Panc1 (cell line): ENCODE measurements at regions of chr7 and their contacts with region 1.

Region 1: GRCh38 chr7:25246306-25246705 is 18.0 kb upstream of the NPVF start:
- DNase-seq: no peak
- ATAC-seq: no peak
- H3K4me3 ChIP-seq: no peak overlapping the region
- H3K27ac ChIP-seq: no peak overlapping the region
- H3K4me1 ChIP-seq: no peaks in the 10 kb centered on the region
- H3K27me3 ChIP-seq: peaks cover under 1% of the 10 kb centered on the region; the same call in 1 of the 2 replicates
- CTCF ChIP-seq: no peak

Region 2: GRCh38 chr7:24948739-24949138 is 297.6 kb before region 1 on chr7:
- CTCF ChIA-PET with region 1: no interaction called
- POLR2A ChIA-PET with region 1: no interaction called
- in situ Hi-C with region 1: no loop called
- intact Hi-C with region 1: no loop called
- DNase-seq: no peak
- ATAC-seq: no peak
- H3K4me3 ChIP-seq: no peak overlapping the region
- H3K27ac ChIP-seq: no peak overlapping the region
- H3K4me1 ChIP-seq: no peaks in the 10 kb centered on the region
- H3K27me3 ChIP-seq: no peaks in the 10 kb centered on the region
- CTCF ChIP-seq: no peak

Region 3: DNA sequence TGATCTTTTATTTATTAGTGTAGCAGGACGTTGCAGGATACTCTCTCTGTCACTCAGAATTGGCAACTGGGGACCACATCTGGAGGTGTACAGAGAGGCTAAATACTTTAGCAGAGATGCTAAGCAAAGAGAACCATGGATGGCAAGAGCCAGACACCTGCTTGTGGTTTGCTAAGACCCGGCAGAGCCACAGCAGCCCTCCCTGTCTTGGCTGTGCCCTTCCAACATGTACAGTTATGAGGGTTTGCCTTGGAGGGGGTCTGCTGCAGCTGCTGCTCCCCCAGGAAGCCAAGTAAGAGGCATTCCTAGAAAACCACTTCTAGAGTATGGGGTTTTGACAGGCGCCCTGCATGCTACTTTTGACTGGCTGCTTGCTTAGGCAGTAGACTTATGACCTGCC is 23.1 kb before region 1 on chr7:
- CTCF ChIA-PET with region 1: interaction called, 4 read pairs
- POLR2A ChIA-PET with region 1: no interaction called
- in situ Hi-C with region 1: no loop called
- intact Hi-C with region 1: loop called (anchors 2 kb)
- DNase-seq: no peak
- ATAC-seq: no peak
- H3K4me3 ChIP-seq: no peak overlapping the region
- H3K27ac ChIP-seq: no peak overlapping the region
- H3K4me1 ChIP-seq: no peaks in the 10 kb centered on the region
- H3K27me3 ChIP-seq: peaks cover 18% of the 10 kb centered on the region
- CTCF ChIP-seq: no peak